ENCODE measurements at regions of chr6 and their contacts with region 1.

Region 1: GRCh38 chr6:2791124-2791974 is 26.2 kb downstream of the WRNIP1 start:
- H3K4me3 ChIP-seq: no peak overlapping the region
- H3K27ac ChIP-seq: no peak overlapping the region
- H3K4me1 ChIP-seq: no peaks in the 10 kb centered on the region
- CTCF ChIP-seq: peak; percentile 59; the same call in 1 of the 2 replicates

Region 2: GRCh38 chr6:2744209-2744771 is 47.1 kb before region 1 on chr6:
- CTCF ChIA-PET with region 1: no interaction called
- POLR2A ChIA-PET with region 1: no interaction called
- H3K4me3 ChIP-seq: no peak overlapping the region
- H3K27ac ChIP-seq: no peak overlapping the region
- H3K4me1 ChIP-seq: peaks cover 12% of the 10 kb centered on the region
- CTCF ChIP-seq: no peak

Region 3: GRCh38 chr6:2764610-2765165 is 26.7 kb before region 1 on chr6:
- CTCF ChIA-PET with region 1: interaction called, 46 read pairs
- POLR2A ChIA-PET with region 1: no interaction called
- H3K4me3 ChIP-seq: peak overlapping the region; percentile 43
- H3K27ac ChIP-seq: peak overlapping the region; percentile 63
- H3K4me1 ChIP-seq: peaks cover 17% of the 10 kb centered on the region
- CTCF ChIP-seq: no peak

Region 4: GRCh38 chr6:2810092-2810671 is 18.8 kb after region 1 on chr6:
- CTCF ChIA-PET with region 1: interaction called, 11 read pairs
- POLR2A ChIA-PET with region 1: no interaction called
- H3K4me3 ChIP-seq: no peak overlapping the region
- H3K27ac ChIP-seq: no peak overlapping the region
- H3K4me1 ChIP-seq: no peaks in the 10 kb centered on the region; the same call in 1 of the 2 replicates
- CTCF ChIP-seq: no peak

Region 5: GRCh38 chr6:2841264-2842138 is 50.2 kb after region 1 on chr6 and contains the start of gene SERPINB1:
- CTCF ChIA-PET with region 1: interaction called, 118 read pairs
- POLR2A ChIA-PET with region 1: interaction called, 15 read pairs
- H3K4me3 ChIP-seq: peak within 1 kb of the TSS; percentile 49
- H3K27ac ChIP-seq: peak within 1 kb of the TSS; percentile 54; the same call in 1 of the 2 replicates
- H3K4me1 ChIP-seq: peaks cover 25% of the 10 kb centered on the region
- CTCF ChIP-seq: peak; percentile 64

Region 6: DNA sequence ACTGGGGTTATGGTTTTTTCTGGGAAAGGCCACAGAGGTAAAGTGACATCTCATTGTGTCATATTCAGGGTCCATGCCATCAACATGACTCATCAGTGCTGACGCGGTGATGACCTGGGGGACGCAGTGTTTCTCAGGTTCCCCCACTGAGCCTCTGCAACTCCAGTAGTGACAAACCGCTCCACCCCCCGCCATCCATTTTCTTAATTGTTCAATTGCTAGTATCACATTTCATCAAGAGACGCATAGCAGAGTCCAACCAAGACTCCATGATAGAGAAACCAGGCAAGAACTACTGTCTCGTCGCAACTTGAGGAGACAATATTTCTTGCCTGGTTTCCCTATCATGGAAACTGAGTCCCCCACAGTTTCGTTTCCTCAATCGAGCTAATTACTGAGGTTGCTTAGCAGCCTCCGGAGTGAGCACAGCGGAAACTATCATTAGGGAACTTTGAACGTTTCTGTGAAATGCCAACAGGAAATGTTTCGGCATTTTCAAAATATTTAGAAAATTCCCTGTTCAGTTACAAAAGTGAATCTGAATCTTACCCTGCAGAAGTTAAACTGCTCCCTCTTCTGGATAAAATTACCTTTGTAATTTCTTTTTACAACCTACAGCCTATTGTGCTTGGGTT is 62.5 kb after region 1 on chr6:
- CTCF ChIA-PET with region 1: interaction called, 20 read pairs
- POLR2A ChIA-PET with region 1: interaction called, 3 read pairs
- H3K4me3 ChIP-seq: peak overlapping the region; percentile 25
- H3K27ac ChIP-seq: no peak overlapping the region
- H3K4me1 ChIP-seq: peaks cover 4% of the 10 kb centered on the region
- CTCF ChIP-seq: peak; percentile 28; the same call in 1 of the 2 replicates

Region 7: GRCh38 chr6:2911171-2911570 is 119.8 kb after region 1 on chr6:
- CTCF ChIA-PET with region 1: interaction called, 13 read pairs
- POLR2A ChIA-PET with region 1: interaction called, 3 read pairs
- H3K4me3 ChIP-seq: no peak overlapping the region
- H3K27ac ChIP-seq: no peak overlapping the region
- H3K4me1 ChIP-seq: no peaks in the 10 kb centered on the region
- CTCF ChIP-seq: no peak

Region 8: DNA sequence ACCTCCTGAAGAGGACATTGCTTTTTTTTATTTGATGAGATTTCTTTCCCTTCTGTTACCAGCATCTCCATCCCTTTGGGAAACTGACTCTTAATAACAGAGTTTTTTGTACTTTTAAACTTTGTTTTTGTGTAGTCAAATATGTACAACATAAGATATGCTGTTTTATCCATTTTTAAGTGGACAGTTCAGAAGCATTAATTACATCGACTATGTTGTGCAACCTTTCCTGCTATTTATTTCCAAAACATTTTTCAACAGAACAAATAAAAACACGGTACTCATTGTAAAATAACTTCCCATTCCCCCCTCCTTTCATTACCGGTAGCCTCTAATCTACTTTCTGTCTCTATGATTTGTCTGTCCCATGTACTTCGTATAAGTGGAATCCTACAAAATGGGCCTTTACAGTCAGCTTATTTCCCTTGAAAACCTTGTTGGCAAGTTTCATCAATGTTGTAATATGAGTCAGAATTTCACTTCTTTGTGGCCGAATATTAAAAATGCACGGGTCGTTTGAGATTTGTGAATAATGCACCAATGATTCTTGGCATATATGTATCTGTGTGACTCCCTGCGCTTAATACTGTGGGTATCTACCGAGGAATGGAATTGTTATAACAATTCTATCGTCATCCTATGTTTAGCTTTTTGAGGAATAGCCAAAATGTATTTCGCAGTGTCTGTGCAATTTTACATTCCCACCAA is 265.9 kb after region 1 on chr6:
- CTCF ChIA-PET with region 1: interaction called, 11 read pairs
- POLR2A ChIA-PET with region 1: interaction called, 4 read pairs
- H3K4me3 ChIP-seq: no peak overlapping the region
- H3K27ac ChIP-seq: no peak overlapping the region
- H3K4me1 ChIP-seq: no peaks in the 10 kb centered on the region
- CTCF ChIP-seq: no peak

Measured in HEK293 (cell line).